Panc1 (cell line): ENCODE measurements at regions of chr3 and their contacts with region 1.

Region 1: DNA sequence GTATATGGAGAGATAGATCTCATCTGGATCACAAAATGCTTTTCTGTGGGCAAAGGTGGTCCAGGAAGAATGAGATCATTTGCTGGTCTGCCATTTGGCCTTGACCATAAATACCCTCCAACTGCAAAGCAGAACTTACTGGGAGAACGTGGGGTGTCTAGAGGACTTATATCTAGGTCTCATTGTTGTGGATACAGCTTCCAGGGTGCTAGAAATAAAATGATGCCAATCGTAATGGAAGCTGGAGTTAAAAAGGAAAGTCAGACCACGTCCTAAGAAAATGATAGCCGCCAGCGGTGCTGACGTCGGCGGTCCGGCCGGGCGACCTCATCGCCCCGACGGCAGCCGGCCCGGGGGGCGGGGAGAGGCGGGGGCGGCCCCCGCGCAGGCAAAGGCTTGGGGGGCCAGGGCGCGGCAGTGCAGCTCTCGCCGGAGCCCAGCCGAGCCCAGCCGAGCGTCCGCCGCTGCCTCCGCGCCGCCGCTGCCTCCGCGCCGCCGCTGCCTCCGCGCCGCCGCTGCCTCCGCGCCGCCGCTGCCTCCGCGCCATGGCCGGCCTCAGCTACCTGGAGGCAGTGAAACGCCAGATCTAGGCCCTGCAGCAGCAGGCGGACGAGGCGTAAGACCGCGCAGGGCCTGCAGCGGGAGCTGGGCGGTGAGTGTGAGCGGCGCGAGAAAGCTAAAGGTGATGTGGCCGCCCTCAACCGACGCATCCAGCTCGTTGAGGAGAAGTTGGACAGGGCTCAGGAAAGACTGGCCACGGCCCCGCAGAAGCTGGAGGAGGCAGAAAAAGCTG is 89.5 kb downstream of the EOMES start:
- DNase-seq: no peak
- ATAC-seq: peak; percentile 82
- H3K4me3 ChIP-seq: peak overlapping the region; percentile 42 to 64
- H3K27ac ChIP-seq: peak overlapping the region; percentile 94
- H3K4me1 ChIP-seq: peaks cover 34% of the 10 kb centered on the region
- H3K27me3 ChIP-seq: no peaks in the 10 kb centered on the region
- CTCF ChIP-seq: no peak

Region 2: GRCh38 chr3:27533718-27534573 is 98.7 kb before region 1 on chr3:
- CTCF ChIA-PET with region 1: interaction called, 3 read pairs
- POLR2A ChIA-PET with region 1: interaction called, 3 read pairs
- in situ Hi-C with region 1: no loop called
- intact Hi-C with region 1: loop called (anchors 2 kb)
- DNase-seq: peak; percentile 99
- ATAC-seq: peak; percentile 93
- H3K4me3 ChIP-seq: peak overlapping the region; percentile 2 to 31; a peak in 2 of 4 replicates
- H3K27ac ChIP-seq: peak overlapping the region; percentile 99
- H3K4me1 ChIP-seq: peaks cover 45% of the 10 kb centered on the region
- H3K27me3 ChIP-seq: no peaks in the 10 kb centered on the region
- CTCF ChIP-seq: no peak

Region 3: GRCh38 chr3:28556195-28556594 is 923.6 kb after region 1 on chr3:
- CTCF ChIA-PET with region 1: no interaction called
- POLR2A ChIA-PET with region 1: no interaction called
- in situ Hi-C with region 1: no loop called
- intact Hi-C with region 1: no loop called
- DNase-seq: no peak
- ATAC-seq: no peak
- H3K4me3 ChIP-seq: no peak overlapping the region
- H3K27ac ChIP-seq: no peak overlapping the region
- H3K4me1 ChIP-seq: no peaks in the 10 kb centered on the region
- H3K27me3 ChIP-seq: no peaks in the 10 kb centered on the region
- CTCF ChIP-seq: no peak